Tibial artery (tissue), 4 donors: ENCODE measurements at regions of chr20 and their contacts with region 1.

Region 1: GRCh38 chr20:47196091-47197081 is 160.1 kb downstream of the ZMYND8 start:
- DNase-seq: peak; percentile 56 to 80
- H3K4me3 ChIP-seq: peak overlapping the region in 1 of 2 donors; percentile 6
- H3K27ac ChIP-seq: no peak overlapping the region
- H3K4me1 ChIP-seq: peaks cover 0 to 8% (median 0%) of the 10 kb centered on the region in 4 donors
- H3K27me3 ChIP-seq: no peaks in the 10 kb centered on the region
- CTCF ChIP-seq: peak; percentile 94 to 98

Region 2: DNA sequence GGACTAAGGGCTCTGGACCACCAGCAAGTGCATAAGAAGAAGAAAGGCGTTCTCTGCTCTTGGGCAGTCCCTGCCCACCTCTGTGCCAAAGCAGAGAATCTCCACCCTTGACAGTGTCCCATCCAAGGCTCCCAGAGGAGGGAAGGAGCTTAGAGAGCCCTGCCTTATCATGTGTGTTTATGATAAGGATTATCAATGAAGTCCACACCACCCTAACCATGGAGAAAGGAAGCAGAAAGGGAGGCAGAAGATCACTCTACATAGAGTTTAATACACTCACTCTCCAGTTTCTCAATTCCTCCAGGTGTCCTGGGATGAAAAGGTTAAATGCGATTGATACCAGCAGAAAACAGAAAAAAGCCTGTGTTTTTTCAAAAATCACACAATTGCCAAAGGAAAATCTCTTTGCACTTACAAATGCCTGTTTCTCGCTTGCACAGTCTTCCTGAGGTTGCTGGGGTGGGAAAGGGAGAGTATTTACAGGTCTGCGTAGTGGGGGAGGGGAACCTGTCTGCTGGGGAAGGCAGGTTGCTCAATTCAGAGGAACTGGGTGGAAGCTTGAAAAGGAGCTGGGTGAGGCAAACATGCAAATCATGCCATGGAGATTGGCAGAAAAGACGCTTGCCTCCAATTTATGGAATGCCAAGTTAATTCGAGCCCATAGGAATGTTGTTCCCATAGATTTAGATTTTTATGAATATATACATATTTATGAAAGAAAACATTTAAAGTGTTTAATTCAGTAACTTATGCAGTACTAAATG is 197.7 kb before region 1 on chr20:
- intact Hi-C with region 1: no loop called
- DNase-seq: no peak
- H3K4me3 ChIP-seq: no peak overlapping the region
- H3K27ac ChIP-seq: no peak overlapping the region
- H3K4me1 ChIP-seq: no peaks in the 10 kb centered on the region
- H3K27me3 ChIP-seq: peaks cover 0 to 17% of the 10 kb centered on the region in 2 donors
- CTCF ChIP-seq: no peak

Region 3: GRCh38 chr20:47173596-47174216 is 22.7 kb before region 1 on chr20:
- intact Hi-C with region 1: no loop called
- DNase-seq: no peak
- H3K4me3 ChIP-seq: no peak overlapping the region
- H3K27ac ChIP-seq: no peak overlapping the region
- H3K4me1 ChIP-seq: peaks cover 0 to 20% (median 4%) of the 10 kb centered on the region in 4 donors
- H3K27me3 ChIP-seq: no peaks in the 10 kb centered on the region
- CTCF ChIP-seq: no peak

Region 4: DNA sequence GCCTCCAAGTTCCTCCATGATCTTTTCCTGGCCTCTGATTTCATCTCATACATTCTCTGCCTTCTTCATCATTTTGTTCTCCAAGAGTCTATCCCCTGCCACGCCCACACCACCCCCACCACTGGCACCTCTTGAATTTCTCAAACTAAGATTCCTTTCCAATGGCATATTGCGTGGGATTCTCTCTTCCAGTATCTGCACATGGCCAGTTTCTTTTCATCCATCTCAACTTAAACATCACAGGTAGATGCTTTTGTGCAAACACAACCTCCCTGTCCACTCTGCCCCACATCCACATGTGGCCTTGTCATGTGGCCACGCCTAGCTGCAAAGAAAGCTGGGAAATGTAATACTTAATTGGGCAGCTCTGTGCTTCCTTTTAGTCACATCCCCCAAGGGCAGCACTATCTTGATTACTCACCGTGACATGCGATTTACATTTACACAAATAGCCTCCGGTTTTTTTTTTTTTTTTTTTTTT is 193.5 kb after region 1 on chr20:
- intact Hi-C with region 1: loop called (anchors 2 kb)
- DNase-seq: no peak
- H3K4me3 ChIP-seq: no peak overlapping the region
- H3K27ac ChIP-seq: no peak overlapping the region
- H3K4me1 ChIP-seq: no peaks in the 10 kb centered on the region
- H3K27me3 ChIP-seq: no peaks in the 10 kb centered on the region
- CTCF ChIP-seq: no peak